HepG2 (cell line): ENCODE measurements at regions of chr4 and their contacts with region 1.

Region 1: DNA sequence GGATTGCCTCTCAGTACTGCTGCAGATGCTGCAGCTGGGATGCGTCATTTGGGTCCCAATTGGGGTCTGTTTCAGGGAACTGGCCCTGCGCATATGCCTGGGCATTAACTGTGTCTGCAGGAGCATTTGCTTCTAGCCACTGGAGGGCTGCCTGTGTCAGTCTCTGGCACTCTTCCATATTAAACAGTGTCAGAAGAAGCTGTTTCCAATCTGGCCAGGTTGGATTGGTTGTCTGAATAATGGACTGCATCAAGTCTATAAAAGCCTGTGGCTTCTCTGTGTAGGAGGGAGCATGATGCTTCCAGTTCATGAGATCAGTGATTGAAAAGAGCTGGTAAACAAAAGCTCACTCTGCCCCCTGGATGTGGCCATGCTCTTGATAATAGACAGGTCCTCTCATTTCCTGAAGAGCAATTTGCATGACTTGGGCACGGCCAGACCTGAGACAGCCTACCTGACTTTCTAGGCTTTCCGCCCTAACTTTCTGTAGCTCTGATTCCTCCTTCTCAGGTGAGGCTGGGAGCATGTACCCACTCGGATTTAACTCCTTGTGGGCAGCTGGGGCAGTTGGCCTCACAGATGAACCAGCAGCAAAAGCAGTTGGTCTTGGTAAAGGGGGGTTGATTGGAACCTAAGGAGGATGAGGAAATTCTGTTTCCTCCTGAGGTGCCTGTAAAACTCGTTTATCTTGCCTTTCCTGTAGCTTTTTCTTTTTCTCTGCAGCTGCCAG is 29.2 kb downstream of the SULT1E1 start:
- DNase-seq: peak; percentile 81
- ATAC-seq: peak; percentile 54
- H3K4me3 ChIP-seq: no peak overlapping the region
- H3K27ac ChIP-seq: peak overlapping the region; percentile 93
- H3K4me1 ChIP-seq: peaks cover 82% of the 10 kb centered on the region
- H3K27me3 ChIP-seq: no peaks in the 10 kb centered on the region
- CTCF ChIP-seq: peak; percentile 53
- EP300 ChIP-seq: 0 out of 4 replicates have a peak, but pooled peaks of 1 of the 2 experiments have one; percentile 8
- POLR2A ChIP-seq: no peak
- RAD21 ChIP-seq: no peak

Region 2: DNA sequence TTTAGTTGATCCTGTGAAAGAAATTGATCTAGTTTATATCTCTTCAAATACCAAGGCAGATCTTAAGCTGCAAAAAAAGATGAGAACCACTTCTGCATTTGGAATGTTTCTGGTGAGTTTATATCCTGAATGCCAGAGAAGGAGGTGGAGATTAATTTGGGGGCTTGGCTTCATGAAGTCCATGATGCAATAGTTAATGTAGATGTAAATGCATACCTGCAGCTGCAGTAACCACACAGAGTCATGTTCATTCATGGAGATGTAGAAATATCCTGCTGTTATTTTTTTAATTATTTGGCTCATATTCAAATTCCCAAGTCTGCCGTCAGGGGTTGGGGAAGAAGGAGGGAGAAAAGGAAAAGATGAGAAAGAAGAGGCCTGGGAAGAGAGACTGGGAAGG is 29.3 kb after region 1 on chr4 and contains the start of gene SULT1E1:
- CTCF ChIA-PET with region 1: no interaction called
- POLR2A ChIA-PET with region 1: interaction called, 11 read pairs
- in situ Hi-C with region 1: no loop called
- intact Hi-C with region 1: no loop called
- DNase-seq: no peak
- ATAC-seq: no peak
- H3K4me3 ChIP-seq: peak within 1 kb of the TSS in 1 of 3 experiments; percentile 25; a peak in 2 of 6 replicates
- H3K27ac ChIP-seq: peak within 1 kb of the TSS; percentile 45
- H3K4me1 ChIP-seq: peaks cover 37% of the 10 kb centered on the region
- H3K27me3 ChIP-seq: no peaks in the 10 kb centered on the region; a peak in 1 of 5 replicates
- CTCF ChIP-seq: no peak
- EP300 ChIP-seq: no peak
- POLR2A ChIP-seq: no peak
- RAD21 ChIP-seq: no peak
- total RNA-seq, gene SULT1E1: 3.7 and 3.9 TPM in 2 replicates

Region 3: DNA sequence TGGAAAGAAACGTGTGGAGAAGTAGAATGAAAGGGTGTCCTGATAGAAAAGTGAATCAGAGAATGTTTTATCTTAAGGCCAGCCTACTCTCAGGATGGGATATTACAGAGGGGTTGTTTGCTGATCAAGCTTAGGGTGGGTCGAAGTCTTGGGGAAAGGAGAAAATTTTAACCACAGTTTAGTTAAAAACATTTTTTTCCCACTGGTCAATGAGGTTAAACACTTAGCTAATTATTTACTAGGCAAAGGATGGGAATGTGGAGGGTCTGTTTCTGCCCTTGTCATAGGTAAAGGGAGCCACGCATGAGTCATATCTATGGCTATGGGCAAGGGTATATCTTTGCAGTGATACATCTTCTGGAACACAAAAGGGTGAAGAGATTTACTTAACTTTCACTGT is 45.3 kb after region 1 on chr4:
- CTCF ChIA-PET with region 1: no interaction called
- POLR2A ChIA-PET with region 1: interaction called, 24 read pairs
- in situ Hi-C with region 1: no loop called
- intact Hi-C with region 1: loop called (anchors 2 kb)
- DNase-seq: peak; percentile 52
- ATAC-seq: peak; percentile 86
- H3K4me3 ChIP-seq: no peak overlapping the region
- H3K27ac ChIP-seq: peak overlapping the region; percentile 34
- H3K4me1 ChIP-seq: peaks cover 51% of the 10 kb centered on the region
- H3K27me3 ChIP-seq: no peaks in the 10 kb centered on the region
- CTCF ChIP-seq: no peak
- EP300 ChIP-seq: peak in 1 of 2 experiments; percentile 38; a peak in 1 of 4 replicates
- POLR2A ChIP-seq: no peak
- RAD21 ChIP-seq: no peak

Region 4: GRCh38 chr4:69951602-69952001 is 120.9 kb after region 1 on chr4:
- CTCF ChIA-PET with region 1: no interaction called
- POLR2A ChIA-PET with region 1: no interaction called
- in situ Hi-C with region 1: no loop called
- intact Hi-C with region 1: no loop called
- DNase-seq: no peak
- ATAC-seq: no peak
- H3K4me3 ChIP-seq: no peak overlapping the region
- H3K27ac ChIP-seq: no peak overlapping the region
- H3K4me1 ChIP-seq: no peaks in the 10 kb centered on the region
- H3K27me3 ChIP-seq: no peaks in the 10 kb centered on the region
- CTCF ChIP-seq: no peak
- EP300 ChIP-seq: no peak
- POLR2A ChIP-seq: no peak
- RAD21 ChIP-seq: no peak